ENCODE measurements at regions of chr19 and their contacts with region 1.

Region 1: GRCh38 chr19:21202865-21203494 is 61.1 kb downstream of the ZNF431 start:
- DNase-seq: peak; percentile 48
- ATAC-seq: peak; percentile 57
- H3K4me3 Mint-ChIP-seq: no peak overlapping the region
- H3K27ac Mint-ChIP-seq: no peak overlapping the region
- H3K4me1 Mint-ChIP-seq: no peaks in the 10 kb centered on the region
- H3K27me3 Mint-ChIP-seq: peaks cover 7% of the 10 kb centered on the region

Region 2: DNA sequence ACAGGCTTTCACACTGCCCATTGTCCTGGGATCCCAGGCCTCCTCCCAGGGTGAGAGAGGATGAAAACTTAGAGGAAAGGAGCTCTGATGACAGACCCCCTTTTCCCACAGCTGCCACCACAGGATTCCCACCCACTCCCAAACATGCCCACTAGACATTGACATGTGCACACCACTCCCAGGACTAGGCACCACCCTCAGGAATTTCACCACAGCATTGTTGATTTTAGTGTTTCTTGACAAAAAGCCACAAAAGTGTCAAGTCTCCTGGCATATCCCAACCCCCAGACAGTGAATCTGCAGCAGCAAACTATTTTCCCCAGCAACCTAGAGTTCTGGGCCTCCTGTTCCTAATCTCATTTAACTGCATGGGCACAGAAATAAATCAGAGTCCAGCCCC is 110.9 kb before region 1 on chr19:
- CTCF ChIA-PET with region 1: no interaction called
- POLR2A ChIA-PET with region 1: no interaction called
- intact Hi-C with region 1: no loop called
- DNase-seq: no peak
- ATAC-seq: no peak
- H3K4me3 Mint-ChIP-seq: no peak overlapping the region
- H3K27ac Mint-ChIP-seq: no peak overlapping the region
- H3K4me1 Mint-ChIP-seq: peaks cover 2% of the 10 kb centered on the region
- H3K27me3 Mint-ChIP-seq: no peaks in the 10 kb centered on the region

Region 3: GRCh38 chr19:21314676-21315075 is 111.7 kb after region 1 on chr19:
- CTCF ChIA-PET with region 1: no interaction called
- POLR2A ChIA-PET with region 1: no interaction called
- intact Hi-C with region 1: no loop called
- DNase-seq: no peak
- ATAC-seq: peak; percentile 39
- H3K4me3 Mint-ChIP-seq: no peak overlapping the region
- H3K27ac Mint-ChIP-seq: peak overlapping the region; percentile 3
- H3K4me1 Mint-ChIP-seq: peaks cover 40% of the 10 kb centered on the region
- H3K27me3 Mint-ChIP-seq: no peaks in the 10 kb centered on the region

Region 4: DNA sequence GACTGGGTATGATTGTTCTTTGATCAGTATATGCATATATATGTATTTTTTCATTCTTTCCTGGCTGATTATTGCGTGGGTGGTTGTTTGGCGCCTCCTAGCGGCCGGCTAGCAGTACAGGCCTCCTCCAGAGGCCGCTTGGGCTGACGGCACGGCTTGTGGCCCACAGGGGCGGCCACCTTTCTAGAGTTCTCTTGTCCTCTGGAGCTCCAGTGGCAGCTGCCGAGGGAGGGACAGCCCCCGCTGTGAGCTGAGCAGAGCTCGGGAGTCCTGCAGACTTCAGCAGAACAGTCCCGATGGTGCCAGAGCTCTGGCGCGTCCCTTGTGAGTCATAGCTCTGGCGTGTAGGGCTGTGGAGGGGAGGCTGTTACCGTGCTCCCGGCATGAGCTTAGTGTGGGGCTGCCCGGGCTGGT is 279.9 kb after region 1 on chr19:
- CTCF ChIA-PET with region 1: interaction called, 5 read pairs
- POLR2A ChIA-PET with region 1: no interaction called
- intact Hi-C with region 1: loop called (anchors 1 kb)
- DNase-seq: peak; percentile 82
- ATAC-seq: peak; percentile 90
- H3K4me3 Mint-ChIP-seq: no peak overlapping the region
- H3K27ac Mint-ChIP-seq: no peak overlapping the region
- H3K4me1 Mint-ChIP-seq: no peaks in the 10 kb centered on the region
- H3K27me3 Mint-ChIP-seq: no peaks in the 10 kb centered on the region

Region 5: GRCh38 chr19:21698215-21698614 is 495.2 kb after region 1 on chr19:
- CTCF ChIA-PET with region 1: interaction called, 4 read pairs
- POLR2A ChIA-PET with region 1: no interaction called
- intact Hi-C with region 1: loop called (anchors 1 to 2 kb)
- DNase-seq: no peak
- ATAC-seq: no peak
- H3K4me3 Mint-ChIP-seq: no peak overlapping the region
- H3K27ac Mint-ChIP-seq: no peak overlapping the region
- H3K4me1 Mint-ChIP-seq: no peaks in the 10 kb centered on the region
- H3K27me3 Mint-ChIP-seq: no peaks in the 10 kb centered on the region

Region 6: GRCh38 chr19:21891081-21891480 is 688.1 kb after region 1 on chr19:
- CTCF ChIA-PET with region 1: no interaction called
- POLR2A ChIA-PET with region 1: no interaction called
- intact Hi-C with region 1: loop called in 1 of 2 experiments (anchors 10 kb)
- DNase-seq: no peak
- ATAC-seq: no peak
- H3K4me3 Mint-ChIP-seq: no peak overlapping the region
- H3K27ac Mint-ChIP-seq: no peak overlapping the region
- H3K4me1 Mint-ChIP-seq: no peaks in the 10 kb centered on the region
- H3K27me3 Mint-ChIP-seq: peaks cover 2% of the 10 kb centered on the region

Region 7: DNA sequence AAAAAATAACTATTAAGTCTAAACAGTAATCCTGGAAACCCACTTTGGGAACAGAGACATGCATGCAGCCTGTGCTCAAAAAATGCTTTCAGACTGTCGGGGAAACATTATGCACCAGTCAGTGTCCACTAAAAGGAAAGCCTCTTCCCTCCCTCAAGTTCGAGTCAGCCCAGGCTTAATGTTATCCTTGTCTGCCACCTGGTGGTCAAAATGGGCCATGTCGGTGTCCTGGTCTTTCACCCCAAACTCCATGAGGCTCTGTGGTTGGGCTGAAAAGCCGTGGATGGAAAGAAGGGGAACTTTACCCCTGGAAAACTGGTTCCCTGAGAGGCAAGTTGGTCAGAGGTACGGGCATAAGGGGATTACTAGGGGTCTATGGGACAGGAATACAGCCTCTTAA is 1342.8 kb after region 1 on chr19:
- CTCF ChIA-PET with region 1: no interaction called
- POLR2A ChIA-PET with region 1: no interaction called
- intact Hi-C with region 1: loop called in 1 of 2 experiments (anchors 1 kb)
- DNase-seq: peak; percentile 65
- ATAC-seq: peak; percentile 47
- H3K4me3 Mint-ChIP-seq: no peak overlapping the region
- H3K27ac Mint-ChIP-seq: no peak overlapping the region
- H3K4me1 Mint-ChIP-seq: no peaks in the 10 kb centered on the region
- H3K27me3 Mint-ChIP-seq: no peaks in the 10 kb centered on the region

Region 8: DNA sequence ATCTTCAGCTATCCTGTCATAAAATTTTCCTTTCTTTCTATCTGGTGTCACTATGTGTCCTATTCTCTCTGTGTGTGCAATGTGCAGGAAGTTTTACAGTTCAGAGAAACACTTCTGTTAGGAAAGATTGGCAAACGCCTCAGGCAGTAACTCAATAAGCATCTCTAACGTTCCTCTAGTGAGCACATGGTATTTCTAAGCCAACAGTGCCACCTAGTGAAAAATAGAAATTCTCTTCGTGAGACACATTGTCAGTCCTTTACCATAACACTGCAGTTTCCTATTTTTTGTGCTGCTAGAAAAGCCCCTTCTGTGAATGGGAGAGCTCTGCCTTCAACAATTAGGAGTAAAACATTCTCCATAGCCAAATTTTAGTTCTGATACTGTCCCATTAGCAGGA is 1679.8 kb after region 1 on chr19:
- CTCF ChIA-PET with region 1: no interaction called
- POLR2A ChIA-PET with region 1: no interaction called
- intact Hi-C with region 1: loop called in 1 of 2 experiments (anchors 10 kb)
- DNase-seq: no peak
- ATAC-seq: no peak
- H3K4me3 Mint-ChIP-seq: no peak overlapping the region
- H3K27ac Mint-ChIP-seq: no peak overlapping the region
- H3K4me1 Mint-ChIP-seq: no peaks in the 10 kb centered on the region
- H3K27me3 Mint-ChIP-seq: no peaks in the 10 kb centered on the region

Measured in activated CD4-positive, alpha-beta T cell treated with anti-CD3 and anti-CD28 coated beads for 36 hours (primary cell).